PC-9 (cell line): ENCODE measurements at regions of chr2 and their contacts with region 1.

Region 1: GRCh38 chr2:184756897-184757296 is 158.6 kb downstream of the ZNF804A start:
- DNase-seq: no peak
- H3K4me3 ChIP-seq: no peak overlapping the region
- H3K27ac ChIP-seq: no peak overlapping the region
- H3K4me1 ChIP-seq: no peaks in the 10 kb centered on the region
- H3K27me3 ChIP-seq: no peaks in the 10 kb centered on the region
- CTCF ChIP-seq: no peak

Region 2: GRCh38 chr2:183859128-183859527 is 897.8 kb before region 1 on chr2:
- CTCF ChIA-PET with region 1: no interaction called
- POLR2A ChIA-PET with region 1: interaction called, 10 read pairs
- intact Hi-C with region 1: no loop called
- DNase-seq: no peak
- H3K4me3 ChIP-seq: no peak overlapping the region
- H3K27ac ChIP-seq: no peak overlapping the region
- H3K4me1 ChIP-seq: no peaks in the 10 kb centered on the region
- H3K27me3 ChIP-seq: no peaks in the 10 kb centered on the region
- CTCF ChIP-seq: no peak

Region 3: DNA sequence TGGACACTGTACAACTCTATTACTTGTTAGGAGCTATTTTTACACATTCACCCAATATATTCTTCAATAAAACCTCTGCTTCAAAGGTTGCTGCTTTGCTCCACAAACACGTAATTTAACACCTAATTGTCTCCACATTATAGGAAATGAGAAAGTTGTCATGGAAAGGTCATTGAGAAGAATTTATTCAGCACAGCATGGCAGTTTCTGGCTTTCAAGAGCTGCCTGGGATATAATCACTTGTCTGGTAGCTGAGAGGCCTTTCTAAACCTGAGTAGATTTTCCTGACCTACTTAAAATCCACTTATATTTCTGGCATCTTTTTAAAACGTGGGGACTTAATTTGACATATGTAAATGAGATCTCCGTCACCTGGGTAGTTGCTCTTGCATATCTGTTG is 57.5 kb after region 1 on chr2:
- CTCF ChIA-PET with region 1: no interaction called
- POLR2A ChIA-PET with region 1: no interaction called
- intact Hi-C with region 1: no loop called
- DNase-seq: no peak
- H3K4me3 ChIP-seq: no peak overlapping the region
- H3K27ac ChIP-seq: no peak overlapping the region
- H3K4me1 ChIP-seq: no peaks in the 10 kb centered on the region
- H3K27me3 ChIP-seq: no peaks in the 10 kb centered on the region
- CTCF ChIP-seq: no peak

Region 4: DNA sequence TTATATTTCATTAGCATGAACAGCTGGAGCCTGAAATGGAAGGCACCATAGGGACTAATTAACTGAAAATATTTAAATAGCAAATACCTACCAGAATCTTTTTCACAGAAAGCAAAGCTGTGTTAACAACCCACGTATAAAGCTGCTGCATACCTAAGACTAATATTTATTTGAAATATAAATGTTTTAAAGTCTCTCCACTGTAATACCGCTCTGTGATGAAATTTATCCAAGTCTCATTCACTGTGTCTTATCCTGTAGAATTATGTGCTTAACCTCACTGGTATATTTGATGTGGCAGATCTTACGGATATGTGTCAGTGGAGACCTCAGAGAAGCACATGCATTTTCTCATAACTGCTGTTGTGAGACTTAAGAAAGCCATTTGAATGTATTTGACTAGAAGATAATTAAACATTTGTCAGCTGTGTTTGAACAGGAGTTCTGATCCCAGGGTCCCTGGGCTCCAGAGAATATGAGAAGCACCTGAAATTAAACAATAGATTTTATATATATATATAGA is 214.7 kb after region 1 on chr2:
- CTCF ChIA-PET with region 1: no interaction called
- POLR2A ChIA-PET with region 1: no interaction called
- intact Hi-C with region 1: no loop called
- DNase-seq: no peak
- H3K4me3 ChIP-seq: no peak overlapping the region
- H3K27ac ChIP-seq: no peak overlapping the region
- H3K4me1 ChIP-seq: no peaks in the 10 kb centered on the region
- H3K27me3 ChIP-seq: no peaks in the 10 kb centered on the region
- CTCF ChIP-seq: no peak